IMR-90 (cell line): ENCODE measurements at regions of chr4 and their contacts with region 1.

Region 1: DNA sequence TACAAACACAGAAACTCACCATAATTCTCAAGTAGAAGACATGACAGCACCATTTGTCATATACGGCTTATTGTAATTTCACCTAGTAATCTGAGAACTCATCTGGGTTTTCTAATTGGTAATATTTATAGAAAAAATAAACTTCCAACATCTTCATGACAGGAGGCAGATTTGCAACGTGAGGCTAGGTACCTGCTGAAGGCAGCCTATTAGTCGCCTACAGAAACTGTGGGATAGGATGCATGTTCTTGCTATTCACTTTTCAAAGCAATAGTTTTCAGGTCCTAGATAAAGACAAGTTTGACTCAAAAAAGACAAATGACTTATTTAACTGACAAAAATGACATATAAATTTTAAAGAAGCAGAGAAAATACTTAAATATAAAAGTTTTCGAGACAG is 2.9 kb downstream of the ZNF732 start:
- DNase-seq: no peak
- ATAC-seq: no peak
- H3K4me3 ChIP-seq: no peak overlapping the region
- H3K27ac ChIP-seq: no peak overlapping the region
- H3K4me1 ChIP-seq: no peaks in the 10 kb centered on the region
- H3K27me3 ChIP-seq: no peaks in the 10 kb centered on the region
- CTCF ChIP-seq: no peak
- POLR2A ChIP-seq: no peak
- RAD21 ChIP-seq: no peak

Region 2: DNA sequence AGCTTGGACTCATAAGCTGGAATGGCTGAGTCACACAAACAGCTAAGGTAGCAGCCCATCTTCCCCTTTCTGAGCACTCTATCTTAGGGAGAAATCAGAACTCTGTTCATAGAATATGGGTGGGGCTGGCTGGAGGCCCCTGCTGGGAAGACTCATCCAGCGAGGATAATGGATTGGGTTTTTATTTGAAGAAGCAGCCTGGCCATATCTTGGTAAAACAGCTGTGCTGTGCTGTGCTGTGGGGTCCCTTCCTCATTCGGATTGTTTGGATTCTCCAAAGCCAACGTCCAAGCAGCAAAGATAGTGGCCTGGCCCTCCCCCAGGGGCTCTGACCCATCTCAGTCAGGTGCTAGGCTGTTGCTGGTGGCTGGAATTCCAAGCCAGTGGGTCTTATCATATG is 114.3 kb before region 1 on chr4:
- CTCF ChIA-PET with region 1: interaction called, 3 read pairs
- POLR2A ChIA-PET with region 1: no interaction called
- dilution Hi-C with region 1: no loop called
- in situ Hi-C with region 1: no loop called
- intact Hi-C with region 1: loop called (anchors 2 kb)
- DNase-seq: no peak
- ATAC-seq: no peak
- H3K4me3 ChIP-seq: no peak overlapping the region
- H3K27ac ChIP-seq: no peak overlapping the region
- H3K4me1 ChIP-seq: no peaks in the 10 kb centered on the region
- H3K27me3 ChIP-seq: no peaks in the 10 kb centered on the region
- CTCF ChIP-seq: no peak
- POLR2A ChIP-seq: no peak
- RAD21 ChIP-seq: no peak

Region 3: GRCh38 chr4:288891-289290 is 13.5 kb before region 1 on chr4:
- CTCF ChIA-PET with region 1: no interaction called
- POLR2A ChIA-PET with region 1: no interaction called
- dilution Hi-C with region 1: no loop called
- in situ Hi-C with region 1: no loop called
- intact Hi-C with region 1: no loop called
- DNase-seq: no peak
- ATAC-seq: no peak
- H3K4me3 ChIP-seq: no peak overlapping the region
- H3K27ac ChIP-seq: no peak overlapping the region
- H3K4me1 ChIP-seq: no peaks in the 10 kb centered on the region
- H3K27me3 ChIP-seq: no peaks in the 10 kb centered on the region
- CTCF ChIP-seq: no peak
- POLR2A ChIP-seq: no peak
- RAD21 ChIP-seq: no peak

Region 4: GRCh38 chr4:373062-373839 is 70.9 kb after region 1 on chr4:
- CTCF ChIA-PET with region 1: no interaction called
- POLR2A ChIA-PET with region 1: no interaction called
- dilution Hi-C with region 1: no loop called
- in situ Hi-C with region 1: no loop called
- intact Hi-C with region 1: no loop called
- DNase-seq: no peak
- ATAC-seq: no peak
- H3K4me3 ChIP-seq: no peak overlapping the region
- H3K27ac ChIP-seq: no peak overlapping the region
- H3K4me1 ChIP-seq: no peaks in the 10 kb centered on the region
- H3K27me3 ChIP-seq: no peaks in the 10 kb centered on the region
- CTCF ChIP-seq: no peak
- POLR2A ChIP-seq: no peak
- RAD21 ChIP-seq: no peak